ENCODE measurements at regions of chr12 and their contacts with region 1.

Region 1: DNA sequence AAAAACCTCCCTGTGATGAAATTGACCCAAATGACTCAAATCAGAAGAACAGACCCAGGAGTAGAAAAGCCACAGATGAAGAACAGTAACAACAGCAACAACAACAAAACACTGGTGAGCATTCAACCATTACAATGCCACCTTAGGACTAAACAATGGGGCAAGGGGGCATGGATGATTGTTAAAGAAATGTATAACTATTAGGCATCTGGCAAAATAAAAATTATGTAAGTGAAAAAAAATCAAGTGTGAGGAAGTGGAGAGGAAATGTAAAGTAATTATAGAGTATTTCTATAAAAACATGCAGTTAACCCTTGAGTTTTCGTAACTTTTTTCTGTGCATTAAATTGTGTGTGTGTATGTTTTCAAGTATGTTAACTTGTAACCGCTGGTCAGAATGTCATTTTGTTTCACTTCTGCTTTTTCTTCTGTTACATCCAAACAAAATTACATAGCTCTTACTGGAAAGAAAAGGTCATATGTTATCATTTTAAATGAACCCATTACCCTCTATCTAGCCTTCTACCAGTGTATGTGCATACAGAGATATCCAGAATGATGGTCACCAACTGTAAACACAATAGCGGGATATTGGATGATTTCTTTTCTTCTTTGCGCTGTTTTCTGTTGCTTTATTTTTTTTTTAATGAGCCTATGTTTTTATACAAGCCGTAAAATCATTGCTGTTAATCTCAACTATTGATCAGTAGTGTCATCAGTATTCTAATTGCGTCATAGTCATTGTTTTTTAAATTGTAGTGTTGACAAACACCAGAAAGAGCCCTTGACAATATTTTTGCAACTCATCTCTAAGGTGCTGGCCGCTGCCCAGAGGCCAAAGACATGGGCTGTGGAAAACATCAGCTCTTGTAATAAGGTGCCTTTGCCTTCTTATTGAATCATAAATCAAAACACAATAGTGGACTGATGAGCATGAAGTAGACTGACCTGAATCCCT is 170.6 kb downstream of the CRADD start:
- DNase-seq: peak; percentile 33
- H3K4me3 Mint-ChIP-seq: peak overlapping the region; percentile 49
- H3K27ac Mint-ChIP-seq: peak overlapping the region; percentile 86
- H3K4me1 Mint-ChIP-seq: peaks cover 74% of the 10 kb centered on the region
- H3K27me3 Mint-ChIP-seq: no peaks in the 10 kb centered on the region

Region 2: GRCh38 chr12:92034858-92035401 is 1812.9 kb before region 1 on chr12:
- intact Hi-C with region 1: loop called (anchors 5 kb)
- DNase-seq: peak; percentile 31
- H3K4me3 Mint-ChIP-seq: peak overlapping the region; percentile 87
- H3K27ac Mint-ChIP-seq: peak overlapping the region; percentile 90
- H3K4me1 Mint-ChIP-seq: peaks cover 64% of the 10 kb centered on the region
- H3K27me3 Mint-ChIP-seq: no peaks in the 10 kb centered on the region

Region 3: DNA sequence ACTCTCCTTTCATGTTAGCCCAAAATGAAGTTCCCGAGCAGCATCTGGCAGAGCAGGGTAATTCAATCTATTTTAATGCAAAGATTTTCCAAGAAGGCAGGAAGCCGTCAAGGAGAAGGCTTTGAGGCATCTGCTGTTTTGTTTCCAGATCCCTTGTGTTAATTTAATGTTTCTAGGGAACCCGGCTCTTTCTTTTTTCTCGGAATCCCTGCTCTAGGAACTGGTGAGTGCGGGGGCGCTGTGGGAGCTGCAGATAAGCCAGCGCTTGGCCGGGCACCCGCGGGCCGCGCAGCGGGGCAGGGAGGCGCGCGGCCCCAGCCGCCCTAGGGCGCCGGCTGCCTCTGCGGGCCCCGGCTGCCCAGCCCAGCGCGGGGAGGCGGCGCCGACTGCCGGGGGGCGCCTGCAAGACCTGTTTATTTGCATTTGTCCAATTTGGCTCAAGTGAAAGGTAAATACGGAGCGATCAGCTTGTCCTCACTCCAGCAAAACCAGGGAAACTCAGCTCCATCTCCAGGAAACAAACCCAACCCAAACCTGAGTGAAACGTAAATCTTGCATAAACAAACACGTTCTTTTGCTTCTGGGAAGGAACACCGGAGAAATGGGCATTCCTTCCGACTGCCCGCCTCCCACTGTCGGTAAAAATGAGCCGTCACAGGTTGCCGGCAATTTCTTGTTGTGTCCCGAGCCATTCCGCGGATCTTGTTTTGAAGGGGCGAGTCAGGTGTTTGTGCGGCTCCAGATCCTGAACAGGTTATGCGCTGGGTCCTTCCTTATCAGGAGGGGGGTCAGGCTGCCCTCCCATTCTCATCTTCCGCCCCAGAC is 105.5 kb before region 1 on chr12:
- intact Hi-C with region 1: loop called (anchors 1 kb)
- DNase-seq: peak; percentile 40
- H3K4me3 Mint-ChIP-seq: peak overlapping the region; percentile 86
- H3K27ac Mint-ChIP-seq: peak overlapping the region; percentile 86
- H3K4me1 Mint-ChIP-seq: peaks cover 50% of the 10 kb centered on the region
- H3K27me3 Mint-ChIP-seq: peaks cover 2% of the 10 kb centered on the region

Region 4: GRCh38 chr12:93766796-93767523 is 80.8 kb before region 1 on chr12:
- intact Hi-C with region 1: loop called (anchors 2 kb)
- DNase-seq: peak; percentile 40
- H3K4me3 Mint-ChIP-seq: peak overlapping the region; percentile 0
- H3K27ac Mint-ChIP-seq: no peak overlapping the region
- H3K4me1 Mint-ChIP-seq: peaks cover 34% of the 10 kb centered on the region
- H3K27me3 Mint-ChIP-seq: peaks cover 6% of the 10 kb centered on the region

Region 5: GRCh38 chr12:93879476-93880421 is 32.0 kb after region 1 on chr12:
- intact Hi-C with region 1: loop called (anchors 1 kb)
- DNase-seq: no peak
- H3K4me3 Mint-ChIP-seq: peak overlapping the region; percentile 23
- H3K27ac Mint-ChIP-seq: peak overlapping the region; percentile 95
- H3K4me1 Mint-ChIP-seq: peaks cover 35% of the 10 kb centered on the region
- H3K27me3 Mint-ChIP-seq: no peaks in the 10 kb centered on the region

Region 6: DNA sequence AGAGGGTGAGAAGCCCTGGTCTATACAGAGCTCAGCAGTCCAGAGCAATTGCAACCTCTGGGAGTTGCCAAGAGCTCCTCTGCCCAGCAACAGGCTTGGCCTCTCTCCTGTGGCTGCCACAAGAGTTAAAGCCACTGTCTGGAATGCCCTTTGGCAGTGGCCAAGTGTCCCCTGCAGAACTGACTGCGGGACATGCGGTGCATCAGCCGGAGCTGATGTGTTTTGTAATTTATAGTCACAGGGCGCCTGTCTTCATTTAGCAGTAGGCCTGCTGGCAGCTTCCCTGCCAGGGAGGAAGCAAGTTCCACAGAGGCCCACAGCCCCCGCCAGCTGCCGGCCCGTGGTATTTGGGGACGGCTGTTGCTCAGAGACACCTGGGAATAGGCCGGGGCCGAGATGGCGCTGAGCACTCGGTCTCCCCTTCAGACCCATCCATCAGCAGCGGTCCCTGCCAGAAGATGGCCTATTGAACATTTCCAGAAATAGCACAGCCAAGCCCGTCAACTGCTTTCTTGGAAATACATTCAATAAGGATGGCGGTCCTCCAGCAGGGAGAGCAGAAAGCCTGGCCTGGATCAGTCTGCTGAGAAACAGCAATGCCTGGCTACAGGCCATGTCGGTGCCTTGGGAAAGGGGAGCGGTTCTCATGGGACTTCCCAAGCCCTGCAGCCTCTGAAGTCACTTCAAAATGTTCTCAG is 46.7 kb after region 1 on chr12:
- intact Hi-C with region 1: loop called (anchors 1 kb)
- DNase-seq: no peak
- H3K4me3 Mint-ChIP-seq: no peak overlapping the region
- H3K27ac Mint-ChIP-seq: no peak overlapping the region
- H3K4me1 Mint-ChIP-seq: peaks cover 54% of the 10 kb centered on the region
- H3K27me3 Mint-ChIP-seq: no peaks in the 10 kb centered on the region

Region 7: DNA sequence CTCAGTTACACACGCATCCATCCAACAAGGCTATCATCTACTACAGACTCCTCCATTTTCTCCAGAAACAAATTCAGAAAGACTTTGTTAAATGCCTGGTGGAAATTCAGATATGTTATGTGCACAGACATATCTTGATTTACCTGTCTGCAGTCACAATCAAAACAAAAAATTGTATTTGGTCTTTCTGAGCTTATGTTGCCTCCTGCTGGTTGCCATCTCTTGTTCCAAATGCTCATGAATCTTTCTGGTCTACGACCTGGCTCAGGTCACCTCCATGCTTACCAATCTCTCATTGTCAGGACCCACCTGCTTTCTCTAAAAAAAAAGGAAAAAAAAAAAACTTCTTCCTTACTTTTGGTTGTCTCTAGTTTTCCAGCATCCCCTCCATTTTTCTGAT is 131.4 kb after region 1 on chr12:
- intact Hi-C with region 1: loop called (anchors 1 kb)
- DNase-seq: peak; percentile 15
- H3K4me3 Mint-ChIP-seq: no peak overlapping the region
- H3K27ac Mint-ChIP-seq: no peak overlapping the region
- H3K4me1 Mint-ChIP-seq: peaks cover 42% of the 10 kb centered on the region
- H3K27me3 Mint-ChIP-seq: peaks cover 10% of the 10 kb centered on the region

Measured in activated T-helper 1 cell treated with anti-CD3 and anti-CD28 coated beads, Interleukin-12 subunit alpha, Interleukin-12 subunit beta, Interleukin-2, Interleukin-4 antibody, amounts not matched to agents 30 ng/mL and 10 ng/mL and 1 ng/mL, durations not matched to agents 14 hours and 24 hours and 36 hours (primary cell).